HepG2 (cell line): ENCODE measurements at regions of chr1 and their contacts with region 1.

Region 1: DNA sequence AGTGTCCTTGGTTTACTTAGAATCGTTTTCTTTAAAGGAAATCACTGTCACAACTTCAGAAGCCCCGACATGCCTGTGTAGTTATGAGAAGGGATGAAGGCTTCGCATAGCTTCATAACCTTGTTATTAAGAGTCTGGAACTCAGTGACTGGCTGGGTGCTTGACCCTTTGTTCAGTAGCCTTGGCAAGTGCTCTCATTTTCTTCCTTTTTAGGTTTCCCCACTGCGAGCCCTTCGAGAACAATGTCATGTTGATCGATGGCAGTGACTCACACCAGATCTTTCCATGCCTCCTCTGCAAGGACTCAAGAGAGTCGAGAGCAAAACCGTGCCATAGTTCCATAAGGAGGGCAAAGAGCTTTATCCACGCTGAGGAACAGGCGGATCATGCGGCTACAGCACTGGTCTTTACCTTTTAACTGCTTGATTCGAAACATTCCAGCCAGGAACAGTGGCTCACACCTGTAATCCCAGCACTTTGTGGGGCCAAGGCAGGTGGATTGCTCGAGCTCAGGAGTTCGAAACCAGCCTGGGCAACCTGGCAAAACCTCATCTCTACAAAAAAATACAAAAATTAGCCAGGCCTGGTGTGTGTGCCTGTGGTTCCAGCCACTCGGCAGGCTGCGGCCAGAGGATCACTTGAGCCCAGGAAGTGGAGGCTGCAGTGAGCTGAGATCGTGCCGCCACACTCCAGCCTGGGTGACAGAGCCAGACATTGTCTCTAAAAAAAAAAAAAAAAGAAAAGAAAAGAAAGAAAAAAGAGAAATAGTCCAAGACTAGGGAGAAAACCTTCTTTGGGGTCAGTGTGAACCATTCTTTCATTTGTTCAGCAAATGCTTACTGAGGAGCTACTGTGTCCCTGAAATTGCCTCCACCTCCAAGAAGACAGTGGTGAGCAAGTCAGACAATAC is 95.4 kb upstream of the ERRFI1 start:
- DNase-seq: peak; percentile 91
- ATAC-seq: peak; percentile 63
- H3K4me3 ChIP-seq: peak overlapping the region in 1 of 3 experiments; percentile 21; a peak in 3 of 6 replicates
- H3K27ac ChIP-seq: peak overlapping the region; percentile 97
- H3K4me1 ChIP-seq: peaks cover 72% of the 10 kb centered on the region
- H3K27me3 ChIP-seq: no peaks in the 10 kb centered on the region
- CTCF ChIP-seq: no peak
- EP300 ChIP-seq: no peak
- POLR2A ChIP-seq: peak; percentile 39 to 50; a peak in 2 of 4 replicates
- RAD21 ChIP-seq: no peak

Region 2: GRCh38 chr1:8026153-8026975 is 95.2 kb before region 1 on chr1 and contains the start of gene ERRFI1:
- CTCF ChIA-PET with region 1: no interaction called
- POLR2A ChIA-PET with region 1: interaction called, 61 read pairs
- in situ Hi-C with region 1: loop called (anchors 25 kb)
- intact Hi-C with region 1: loop called (anchors 2 kb)
- DNase-seq: peak; percentile 86
- ATAC-seq: peak; percentile 82
- H3K4me3 ChIP-seq: peak within 1 kb of the TSS; percentile 94 to 100 (median 95)
- H3K27ac ChIP-seq: peak within 1 kb of the TSS; percentile 99
- H3K4me1 ChIP-seq: peaks cover 29% of the 10 kb centered on the region
- H3K27me3 ChIP-seq: peaks cover 0 to 5% of the 10 kb centered on the region in 2 experiments; a peak in 1 of 5 replicates
- CTCF ChIP-seq: peak; percentile 21; the same call in 1 of the 2 replicates
- EP300 ChIP-seq: no peak
- POLR2A ChIP-seq: peak; percentile 95 to 97
- RAD21 ChIP-seq: peak; percentile 59
- total RNA-seq, gene ERRFI1: 84.4 and 99.5 TPM in 2 replicates

Region 3: DNA sequence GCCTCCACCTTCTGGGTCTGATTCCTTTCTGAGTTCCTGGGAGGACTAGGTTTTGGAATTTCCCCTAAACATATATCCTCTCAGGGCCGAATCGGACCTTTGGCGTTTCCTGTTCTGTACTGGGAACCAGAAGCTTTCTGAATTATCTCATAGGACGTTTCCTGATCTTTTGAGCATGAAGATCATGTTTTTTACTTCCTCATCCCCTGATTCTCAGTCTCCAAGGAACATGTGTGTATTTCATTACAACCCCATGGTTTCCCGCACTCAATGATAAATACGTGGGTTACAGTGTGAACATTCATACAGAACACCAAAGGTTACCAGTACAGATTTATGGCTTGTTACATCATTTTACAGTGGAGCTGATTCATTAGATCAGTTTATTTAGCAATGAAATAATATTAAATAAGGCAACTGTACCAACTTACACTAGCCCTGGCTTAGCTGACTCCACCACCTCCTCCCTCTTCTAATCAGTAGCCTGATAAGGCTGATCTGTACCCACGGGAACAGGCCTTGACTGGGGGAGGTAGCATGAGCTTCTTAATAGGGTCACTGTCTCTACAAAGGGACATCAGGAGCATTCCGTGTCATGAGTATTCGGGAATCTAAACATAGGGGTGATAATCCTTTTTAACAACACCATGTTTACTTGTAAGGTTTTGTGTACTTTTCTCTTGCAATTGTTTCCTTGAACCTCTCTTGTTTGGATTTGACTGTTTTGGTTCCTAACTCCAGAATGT is 37.6 kb before region 1 on chr1:
- CTCF ChIA-PET with region 1: no interaction called
- POLR2A ChIA-PET with region 1: interaction called, 34 read pairs
- in situ Hi-C with region 1: no loop called
- intact Hi-C with region 1: no loop called
- DNase-seq: peak; percentile 95
- ATAC-seq: peak; percentile 95
- H3K4me3 ChIP-seq: no peak overlapping the region
- H3K27ac ChIP-seq: peak overlapping the region; percentile 63
- H3K4me1 ChIP-seq: peaks cover 85% of the 10 kb centered on the region
- H3K27me3 ChIP-seq: no peaks in the 10 kb centered on the region
- CTCF ChIP-seq: no peak
- EP300 ChIP-seq: peak in 1 of 2 experiments; percentile 95; a peak in 2 of 4 replicates
- POLR2A ChIP-seq: no peak
- RAD21 ChIP-seq: no peak

Region 4: GRCh38 chr1:8142955-8143629 is 21.6 kb after region 1 on chr1:
- CTCF ChIA-PET with region 1: no interaction called
- POLR2A ChIA-PET with region 1: interaction called, 45 read pairs
- in situ Hi-C with region 1: no loop called
- intact Hi-C with region 1: no loop called
- DNase-seq: no peak
- ATAC-seq: no peak; the same call in 2 of the 3 replicates
- H3K4me3 ChIP-seq: no peak overlapping the region
- H3K27ac ChIP-seq: peak overlapping the region; percentile 24
- H3K4me1 ChIP-seq: peaks cover 68% of the 10 kb centered on the region
- H3K27me3 ChIP-seq: no peaks in the 10 kb centered on the region
- CTCF ChIP-seq: no peak
- EP300 ChIP-seq: no peak
- POLR2A ChIP-seq: no peak
- RAD21 ChIP-seq: no peak

Region 5: DNA sequence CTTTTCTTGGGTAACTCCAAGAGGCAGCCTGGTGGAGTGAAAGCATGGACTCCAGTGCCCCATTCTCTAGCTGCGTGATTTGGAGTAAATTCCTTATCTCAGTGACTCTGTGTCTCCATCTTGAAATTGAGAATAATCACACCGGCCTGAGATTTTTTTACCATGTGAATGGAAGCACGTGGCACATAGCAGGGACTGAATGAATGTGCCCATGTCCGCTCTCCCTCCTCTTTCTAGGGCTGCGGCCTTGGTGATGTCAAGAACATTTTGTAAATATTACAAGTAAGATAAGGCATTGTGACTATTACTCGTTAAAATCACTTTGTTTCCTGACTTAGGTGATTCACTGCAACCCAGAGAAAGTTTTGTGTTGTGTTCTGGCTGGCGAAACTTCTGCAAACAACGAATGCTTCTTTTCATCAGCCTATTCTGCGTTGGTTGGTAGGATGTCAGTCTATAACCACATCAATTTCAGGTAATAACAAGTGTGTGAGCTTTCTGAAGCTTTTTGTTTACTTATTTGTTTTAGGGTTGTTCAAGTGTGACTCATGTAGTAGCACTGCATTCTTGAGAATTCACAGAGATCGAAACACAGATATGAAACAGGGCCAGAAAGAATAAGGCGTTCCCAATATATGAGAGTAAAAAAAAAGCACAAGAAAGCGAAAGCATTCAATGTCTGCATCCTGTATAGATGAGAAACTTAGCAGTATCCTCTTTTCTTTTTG is 60.7 kb after region 1 on chr1:
- CTCF ChIA-PET with region 1: no interaction called
- POLR2A ChIA-PET with region 1: interaction called, 4 read pairs
- in situ Hi-C with region 1: no loop called
- intact Hi-C with region 1: loop called (anchors 1 kb)
- DNase-seq: peak; percentile 85
- ATAC-seq: peak; percentile 75
- H3K4me3 ChIP-seq: no peak overlapping the region; a peak in 1 of 6 replicates
- H3K27ac ChIP-seq: peak overlapping the region; percentile 64
- H3K4me1 ChIP-seq: peaks cover 54% of the 10 kb centered on the region
- H3K27me3 ChIP-seq: no peaks in the 10 kb centered on the region
- CTCF ChIP-seq: no peak
- EP300 ChIP-seq: peak in 1 of 2 experiments; percentile 76; a peak in 1 of 4 replicates
- POLR2A ChIP-seq: no peak
- RAD21 ChIP-seq: 0 out of 2 replicates have a peak, but pooled peaks have one; percentile 21

Region 6: DNA sequence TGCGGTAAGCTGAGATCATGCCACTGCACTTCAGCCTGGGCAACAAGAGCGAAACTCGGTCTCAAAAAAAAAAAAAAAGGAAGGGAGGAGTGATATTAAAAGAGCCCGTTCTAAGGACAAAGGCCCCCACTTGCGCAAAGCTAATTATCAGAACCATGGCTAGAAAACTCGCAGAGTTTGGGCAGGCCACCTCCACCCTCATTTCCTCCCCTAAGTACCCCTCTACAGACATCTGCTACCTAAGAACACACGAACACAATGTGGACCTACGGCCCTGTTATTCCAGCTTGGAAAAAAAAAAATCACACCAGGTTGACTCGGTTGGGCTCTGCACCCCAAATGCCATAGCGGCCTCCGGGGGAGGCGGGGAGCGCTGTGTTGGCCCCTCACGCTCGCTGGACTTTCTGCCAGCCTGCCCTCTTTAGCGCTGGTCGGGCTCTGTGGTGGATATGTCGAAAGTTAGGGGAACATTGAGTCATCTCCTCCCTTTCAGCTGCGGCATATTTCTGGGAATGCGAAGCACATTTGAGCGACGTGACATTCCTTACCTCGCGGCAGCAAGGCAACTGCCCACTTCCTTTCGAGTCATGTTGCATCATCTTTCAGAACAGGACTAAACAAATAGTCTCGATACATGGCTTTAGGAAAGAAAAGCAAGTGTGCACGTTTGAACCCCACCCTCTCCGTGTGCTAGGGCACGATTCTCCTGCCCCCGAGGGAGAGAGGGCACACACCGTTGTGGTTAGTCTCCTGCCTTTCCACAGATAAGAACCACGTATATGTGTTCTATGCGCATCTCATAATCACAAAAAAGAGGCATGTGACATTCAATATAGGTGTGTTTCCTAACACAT is 90.3 kb after region 1 on chr1:
- CTCF ChIA-PET with region 1: no interaction called
- POLR2A ChIA-PET with region 1: interaction called, 7 read pairs
- in situ Hi-C with region 1: no loop called
- intact Hi-C with region 1: loop called (anchors 2 kb)
- DNase-seq: peak; percentile 97
- ATAC-seq: peak; percentile 94
- H3K4me3 ChIP-seq: no peak overlapping the region
- H3K27ac ChIP-seq: peak overlapping the region; percentile 87
- H3K4me1 ChIP-seq: peaks cover 81% of the 10 kb centered on the region
- H3K27me3 ChIP-seq: no peaks in the 10 kb centered on the region
- CTCF ChIP-seq: peak; percentile 36; the same call in 1 of the 2 replicates
- EP300 ChIP-seq: peak in 1 of 2 experiments; percentile 98; a peak in 3 of 4 replicates
- POLR2A ChIP-seq: peak; percentile 59 to 71
- RAD21 ChIP-seq: no peak